Ascending aorta (tissue), 2 donors: ENCODE measurements at regions of chr2 and their contacts with region 1.

Region 1: GRCh38 chr2:106953236-106953635 is 67.3 kb upstream of the ST6GAL2 start:
- DNase-seq: no peak
- H3K4me3 ChIP-seq: no peak overlapping the region
- H3K27ac ChIP-seq: no peak overlapping the region
- H3K4me1 ChIP-seq: peaks cover 0 to 3% of the 10 kb centered on the region in 2 donors
- H3K27me3 ChIP-seq: no peaks in the 10 kb centered on the region
- CTCF ChIP-seq: no peak

Region 2: GRCh38 chr2:106921451-106921850 is 31.8 kb before region 1 on chr2:
- intact Hi-C with region 1: no loop called
- DNase-seq: no peak
- H3K4me3 ChIP-seq: no peak overlapping the region
- H3K27ac ChIP-seq: no peak overlapping the region
- H3K4me1 ChIP-seq: no peaks in the 10 kb centered on the region
- H3K27me3 ChIP-seq: no peaks in the 10 kb centered on the region
- CTCF ChIP-seq: no peak

Region 3: GRCh38 chr2:106996171-106996769 is 43.0 kb after region 1 on chr2:
- intact Hi-C with region 1: loop called (anchors 5 kb)
- DNase-seq: no peak
- H3K4me3 ChIP-seq: peak overlapping the region in 1 of 2 donors; percentile 53
- H3K27ac ChIP-seq: peak overlapping the region in 1 of 2 donors; percentile 68
- H3K4me1 ChIP-seq: peaks cover 6 to 16% of the 10 kb centered on the region in 2 donors
- H3K27me3 ChIP-seq: no peaks in the 10 kb centered on the region
- CTCF ChIP-seq: no peak

Region 4: GRCh38 chr2:107182981-107183380 is 229.7 kb after region 1 on chr2:
- intact Hi-C with region 1: no loop called
- DNase-seq: no peak
- H3K4me3 ChIP-seq: no peak overlapping the region
- H3K27ac ChIP-seq: no peak overlapping the region
- H3K4me1 ChIP-seq: no peaks in the 10 kb centered on the region
- H3K27me3 ChIP-seq: no peaks in the 10 kb centered on the region
- CTCF ChIP-seq: no peak

Region 5: DNA sequence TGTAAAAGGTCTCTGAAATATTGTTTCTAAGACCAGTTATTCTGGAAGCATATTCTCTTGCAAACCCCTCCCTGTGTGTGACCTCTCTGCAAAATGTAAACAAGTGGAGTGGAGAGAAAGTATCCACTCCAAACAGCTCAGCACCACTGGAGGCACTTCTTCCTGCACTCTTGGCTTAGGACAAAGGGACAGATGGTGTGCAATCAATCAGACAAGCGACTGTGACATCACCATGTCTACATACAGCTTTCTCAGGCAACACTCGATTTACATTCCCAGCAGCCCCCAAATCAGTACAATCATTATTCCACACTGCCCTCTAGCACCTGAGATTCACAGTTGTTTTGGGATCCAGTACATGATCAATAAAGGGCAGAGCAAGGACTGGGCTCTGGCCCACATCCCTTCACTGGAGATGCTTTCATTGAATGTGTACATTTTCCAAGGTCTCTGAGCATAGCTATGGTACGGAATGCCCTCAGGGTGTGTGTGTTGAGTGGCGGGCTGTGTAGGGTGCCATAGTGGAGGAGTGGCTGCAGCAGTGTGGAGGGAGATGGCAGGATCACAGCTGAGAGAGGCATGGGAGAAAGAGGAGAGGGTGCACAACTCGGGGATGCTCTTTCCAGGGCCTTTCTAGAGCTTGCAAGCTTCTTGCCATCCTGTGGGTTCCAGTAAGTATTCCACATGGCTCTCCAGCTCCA is 244.5 kb after region 1 on chr2:
- intact Hi-C with region 1: no loop called
- DNase-seq: no peak
- H3K4me3 ChIP-seq: no peak overlapping the region
- H3K27ac ChIP-seq: no peak overlapping the region
- H3K4me1 ChIP-seq: no peaks in the 10 kb centered on the region
- H3K27me3 ChIP-seq: no peaks in the 10 kb centered on the region
- CTCF ChIP-seq: no peak